Activated CD8-positive, alpha-beta memory T cell treated with anti-CD3 and anti-CD28 coated beads, Interleukin-2, amount 10 ng/mL, durations not matched to agents 7 days and 5 days (primary cell): ENCODE measurements at regions of chr15 and their contacts with region 1.

Region 1: DNA sequence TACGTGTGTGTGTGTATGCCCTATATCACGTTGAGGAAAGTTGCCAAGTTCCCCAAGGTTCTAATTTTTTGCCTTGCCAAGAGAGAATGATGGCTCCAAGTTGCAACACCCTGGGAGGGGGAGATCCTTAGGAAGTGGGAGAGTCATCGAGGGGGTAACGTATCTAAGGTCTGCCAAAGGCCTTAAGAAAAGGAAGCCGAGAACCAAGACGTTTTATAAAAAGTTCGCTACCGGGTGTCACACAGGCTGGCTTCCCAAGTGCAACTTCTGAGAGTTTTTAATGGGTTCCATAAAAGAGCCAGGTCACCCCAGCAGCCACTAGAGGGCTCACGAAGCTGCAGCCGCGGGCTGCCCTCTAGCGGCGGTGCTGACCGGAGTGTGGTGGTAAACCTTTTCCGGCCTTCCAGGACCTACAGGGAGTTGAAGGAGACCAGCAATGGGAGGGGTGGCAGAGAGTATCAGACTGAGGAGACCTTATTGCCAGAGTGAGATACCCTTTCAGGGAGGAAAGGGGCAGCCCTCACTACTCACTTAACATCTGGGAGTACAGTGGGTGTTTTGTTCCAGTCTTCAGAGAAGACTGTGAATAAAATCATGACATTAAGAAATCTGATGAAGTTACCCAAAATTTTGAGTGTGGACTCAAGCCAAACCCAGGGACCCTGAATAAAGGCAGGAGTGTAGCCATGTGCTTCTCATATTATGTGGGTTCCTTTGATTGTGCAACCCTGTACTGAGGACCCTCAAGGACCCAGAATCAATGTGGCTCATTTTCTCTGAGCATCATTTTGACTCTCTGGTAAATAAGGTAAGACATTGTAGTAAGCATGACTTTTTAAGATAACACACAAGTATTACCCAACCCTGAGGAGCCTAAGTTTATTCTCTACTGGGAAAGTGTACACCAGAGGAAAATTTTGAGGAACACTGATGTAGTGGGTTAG is 2.5 kb upstream of the RFX7 start:
- DNase-seq: peak; percentile 91
- ATAC-seq: peak; percentile 75
- H3K4me3 Mint-ChIP-seq: peak overlapping the region; percentile 98
- H3K27ac Mint-ChIP-seq: peak overlapping the region; percentile 91
- H3K4me1 Mint-ChIP-seq: peaks cover 28% of the 10 kb centered on the region
- H3K27me3 Mint-ChIP-seq: no peaks in the 10 kb centered on the region

Region 2: DNA sequence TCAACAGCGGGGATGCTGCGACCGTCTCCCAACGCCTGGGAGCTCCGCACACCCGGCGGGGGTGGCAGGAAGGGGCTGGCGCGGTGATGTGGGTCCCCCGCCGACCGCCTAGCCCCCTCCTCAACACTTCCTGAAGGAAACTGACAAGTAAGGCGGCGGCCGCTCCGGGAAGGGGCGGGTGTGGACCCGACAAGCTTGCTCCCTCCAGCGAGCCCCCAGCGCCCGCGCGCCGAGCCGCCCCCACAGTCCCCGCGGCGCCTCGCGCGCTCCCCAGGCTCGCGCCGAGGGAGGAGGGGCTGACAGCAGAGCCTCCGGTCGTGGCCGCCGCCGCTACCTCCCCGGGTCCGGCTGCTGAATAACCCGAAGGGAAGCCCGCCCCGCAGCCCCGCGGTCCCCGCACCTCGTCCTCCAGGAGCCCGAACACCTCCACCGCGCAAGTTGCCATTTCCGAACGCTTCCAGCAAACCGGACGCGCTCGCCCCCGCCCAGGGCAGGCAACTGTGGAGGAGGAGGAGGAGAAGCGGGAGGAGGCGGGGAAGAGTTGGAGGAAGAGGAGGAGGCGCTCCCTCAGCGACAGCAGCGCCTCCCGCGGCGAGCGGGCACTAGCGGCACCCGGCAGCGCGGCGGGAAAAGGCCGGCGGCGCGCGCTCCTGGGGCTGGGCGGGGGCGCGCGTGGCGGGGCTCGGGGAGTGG is 252.9 kb before region 1 on chr15 and contains the start of gene NEDD4:
- CTCF ChIA-PET with region 1: interaction called, 10 read pairs
- DNase-seq: peak; percentile 81
- ATAC-seq: peak; percentile 91
- H3K4me3 Mint-ChIP-seq: peak within 1 kb of the TSS; percentile 85
- H3K27ac Mint-ChIP-seq: peak within 1 kb of the TSS; percentile 58
- H3K4me1 Mint-ChIP-seq: peaks cover 16% of the 10 kb centered on the region
- H3K27me3 Mint-ChIP-seq: peaks cover 37% of the 10 kb centered on the region
- total RNA-seq, gene NEDD4: 9.9 to 14.9 TPM